Activated CD4-positive, alpha-beta memory T cell treated with anti-CD3 and anti-CD28 coated beads for 36 hours (primary cell): ENCODE measurements at regions of chr19 and their contacts with region 1.

Region 1: DNA sequence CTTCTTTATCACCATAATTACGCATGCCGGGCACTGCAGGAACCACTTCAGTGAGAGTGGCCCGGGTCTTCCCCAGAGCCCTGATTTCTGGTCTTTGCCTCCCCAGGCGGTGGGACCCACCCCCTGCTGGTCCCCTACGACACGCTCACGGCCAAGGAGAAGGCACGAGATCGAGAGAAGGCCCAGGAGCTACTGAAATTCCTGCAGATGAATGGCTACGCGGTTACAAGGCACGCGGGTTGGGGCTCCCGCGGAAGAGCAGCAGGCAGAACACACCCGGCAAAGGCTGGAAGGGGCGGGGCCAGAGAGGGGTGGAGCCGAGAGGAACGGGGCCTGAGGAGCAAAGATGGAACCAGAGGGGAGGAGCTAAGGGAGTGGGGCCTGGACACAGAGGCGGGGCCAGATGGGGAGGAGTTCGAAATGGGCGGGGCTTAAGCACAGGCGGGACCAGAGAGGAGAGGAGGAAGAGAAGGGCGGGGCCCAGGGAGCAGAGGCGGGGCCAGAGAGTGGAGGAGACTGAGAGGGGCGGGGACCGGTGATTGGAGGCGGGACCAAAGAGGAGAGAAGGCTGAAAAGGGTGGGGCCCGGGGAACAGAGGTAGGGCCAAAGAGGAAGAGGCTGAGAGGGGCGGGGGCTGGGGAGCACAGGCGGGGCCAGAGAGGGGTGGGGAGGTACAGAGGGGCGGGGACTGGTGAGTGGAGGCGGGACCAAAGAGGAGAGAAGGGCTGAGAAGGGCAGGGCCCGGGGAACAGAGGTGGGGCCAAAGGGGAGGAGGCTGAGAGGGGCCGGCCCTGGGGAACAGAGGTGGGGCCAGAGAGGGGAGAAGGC is 73.4 kb downstream of the RYR1 start:
- DNase-seq: peak; percentile 96
- H3K4me3 Mint-ChIP-seq: no peak overlapping the region
- H3K27ac Mint-ChIP-seq: no peak overlapping the region
- H3K4me1 Mint-ChIP-seq: peaks cover 4% of the 10 kb centered on the region
- H3K27me3 Mint-ChIP-seq: no peaks in the 10 kb centered on the region

Region 2: GRCh38 chr19:38736413-38737280 is 229.7 kb after region 1 on chr19:
- CTCF ChIA-PET with region 1: no interaction called
- POLR2A ChIA-PET with region 1: no interaction called
- intact Hi-C with region 1: loop called (anchors 1 kb)
- DNase-seq: peak; percentile 82
- H3K4me3 Mint-ChIP-seq: peak overlapping the region; percentile 51
- H3K27ac Mint-ChIP-seq: no peak overlapping the region
- H3K4me1 Mint-ChIP-seq: peaks cover 38% of the 10 kb centered on the region
- H3K27me3 Mint-ChIP-seq: no peaks in the 10 kb centered on the region